ENCODE measurements at regions of chr19 and their contacts with region 1.

Region 1: GRCh38 chr19:872266-872951 is 12.9 kb downstream of the CFD start:
- DNase-seq: peak; percentile 65 to 92 (median 82)
- ATAC-seq: peak; percentile 81 to 84
- H3K4me3 Mint-ChIP-seq: peak overlapping the region; percentile 70 to 85 (median 82)
- H3K27ac Mint-ChIP-seq: peak overlapping the region; percentile 59 to 96 (median 94)
- H3K4me1 Mint-ChIP-seq: peaks cover 7 to 17% (median 11%) of the 10 kb centered on the region in 4 donors
- H3K27me3 Mint-ChIP-seq: peaks cover 0 to 2% (median 0%) of the 10 kb centered on the region in 5 donors

Region 2: DNA sequence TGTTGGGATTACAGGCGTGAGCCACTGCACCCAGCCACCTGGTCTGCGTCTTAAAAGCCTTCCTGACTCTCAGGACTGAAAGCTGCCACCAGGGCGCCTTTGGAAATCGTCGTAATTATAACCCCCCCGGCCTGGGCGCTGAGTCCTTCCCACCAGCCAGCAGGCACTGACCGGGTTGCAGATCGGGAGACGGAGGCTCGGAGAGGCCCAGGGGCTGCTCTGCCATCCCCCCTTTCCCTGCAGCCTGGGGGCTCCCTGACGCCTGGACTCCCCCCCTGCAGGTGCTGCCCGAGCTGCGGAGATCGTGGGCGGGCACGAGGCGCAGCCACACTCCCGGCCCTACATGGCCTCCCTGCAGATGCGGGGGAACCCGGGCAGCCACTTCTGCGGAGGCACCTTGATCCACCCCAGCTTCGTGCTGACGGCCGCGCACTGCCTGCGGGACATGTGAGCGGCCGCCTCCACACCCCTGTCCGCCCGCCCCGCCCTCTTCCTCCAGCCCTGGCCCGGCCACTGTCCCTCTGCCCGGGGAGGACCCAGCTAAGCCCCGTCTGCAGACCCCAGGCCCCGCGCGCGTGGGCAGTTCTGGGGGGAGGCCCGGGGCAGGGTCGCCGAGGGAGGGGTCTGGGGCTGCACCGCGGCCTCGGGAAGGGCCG is 29.1 kb before region 1 on chr19:
- POLR2A ChIA-PET with region 1: no interaction called
- DNase-seq: no peak
- ATAC-seq: peak; percentile 44 to 54
- H3K4me3 Mint-ChIP-seq: peak overlapping the region in 2 of 10 donors; percentile 9 to 36
- H3K27ac Mint-ChIP-seq: no peak overlapping the region
- H3K4me1 Mint-ChIP-seq: peaks cover 3 to 13% (median 6%) of the 10 kb centered on the region in 4 donors
- H3K27me3 Mint-ChIP-seq: peaks cover 15 to 55% (median 38%) of the 10 kb centered on the region in 5 donors

Region 3: DNA sequence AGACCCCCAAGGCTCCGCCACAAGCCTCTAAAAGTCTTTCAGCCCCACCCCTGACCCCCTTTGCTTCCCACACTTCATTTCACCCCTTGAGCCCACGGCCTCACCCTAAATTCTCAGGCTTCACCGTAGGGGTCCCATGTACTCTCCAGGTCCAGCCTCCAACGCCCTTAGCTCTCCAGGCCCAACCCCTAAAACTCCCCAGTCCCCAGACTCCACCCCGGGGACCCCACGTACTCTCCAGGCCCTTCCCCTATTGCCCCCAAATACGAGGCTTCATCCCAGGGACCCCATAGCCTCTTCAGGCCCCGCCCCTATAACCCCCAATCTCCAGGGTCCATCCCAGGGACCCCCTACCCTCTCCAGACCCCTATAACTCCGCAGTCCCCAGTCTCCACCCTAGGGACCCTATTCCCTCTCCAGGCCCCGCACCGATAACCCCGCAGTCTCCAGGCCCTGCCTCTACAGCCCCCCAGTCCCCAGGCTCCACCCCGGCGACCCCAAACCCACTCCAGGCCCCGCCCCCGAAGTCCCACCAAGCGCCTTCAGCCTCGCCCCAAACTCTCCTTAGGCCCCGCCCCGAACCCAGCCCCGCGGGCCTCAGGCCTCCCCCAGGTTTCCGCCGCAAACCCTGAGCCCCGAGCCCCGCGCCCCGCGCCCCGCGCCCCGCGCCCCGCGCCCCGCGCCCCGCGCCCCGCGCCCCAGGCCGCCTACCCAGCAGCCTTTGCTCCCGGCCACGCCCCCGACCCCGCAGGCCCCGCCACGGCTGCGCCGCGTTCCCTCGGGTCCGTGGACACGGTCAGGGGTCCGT is 20.0 kb after region 1 on chr19:
- POLR2A ChIA-PET with region 1: interaction called, 20 read pairs
- DNase-seq: peak in 1 of 10 donors; percentile 53
- ATAC-seq: peak; percentile 49 to 59
- H3K4me3 Mint-ChIP-seq: peak overlapping the region; percentile 77 to 96 (median 90)
- H3K27ac Mint-ChIP-seq: peak overlapping the region; percentile 66 to 100 (median 97)
- H3K4me1 Mint-ChIP-seq: peaks cover 6 to 41% (median 32%) of the 10 kb centered on the region in 4 donors
- H3K27me3 Mint-ChIP-seq: peaks cover 0 to 3% (median 0%) of the 10 kb centered on the region in 5 donors

Region 4: GRCh38 chr19:900302-901111 is 28.1 kb after region 1 on chr19:
- POLR2A ChIA-PET with region 1: interaction called, 19 read pairs
- DNase-seq: peak in 2 of 10 donors; percentile 39 to 74
- ATAC-seq: peak; percentile 33 to 62
- H3K4me3 Mint-ChIP-seq: no peak overlapping the region
- H3K27ac Mint-ChIP-seq: peak overlapping the region in 5 of 10 donors; percentile 38 to 83 (median 51)
- H3K4me1 Mint-ChIP-seq: peaks cover 5 to 46% (median 15%) of the 10 kb centered on the region in 4 donors
- H3K27me3 Mint-ChIP-seq: peaks cover 0 to 3% (median 0%) of the 10 kb centered on the region in 5 donors

Region 5: GRCh38 chr19:907183-907853 is 34.9 kb after region 1 on chr19:
- POLR2A ChIA-PET with region 1: interaction called, 23 read pairs
- DNase-seq: peak in 3 of 10 donors; percentile 45 to 49 (median 47)
- ATAC-seq: peak in 1 of 2 donors; percentile 4
- H3K4me3 Mint-ChIP-seq: peak overlapping the region; percentile 48 to 91 (median 86)
- H3K27ac Mint-ChIP-seq: peak overlapping the region; percentile 99 to 100 (median 100)
- H3K4me1 Mint-ChIP-seq: peaks cover 14 to 72% (median 62%) of the 10 kb centered on the region in 4 donors
- H3K27me3 Mint-ChIP-seq: no peaks in the 10 kb centered on the region

Region 6: GRCh38 chr19:920051-920864 is 47.8 kb after region 1 on chr19:
- POLR2A ChIA-PET with region 1: interaction called, 165 read pairs
- DNase-seq: peak in 9 of 10 donors; percentile 60 to 89 (median 71)
- ATAC-seq: peak; percentile 63 to 67
- H3K4me3 Mint-ChIP-seq: peak overlapping the region; percentile 67 to 90 (median 84)
- H3K27ac Mint-ChIP-seq: peak overlapping the region in 8 of 10 donors; percentile 17 to 90 (median 82)
- H3K4me1 Mint-ChIP-seq: peaks cover 11 to 34% (median 24%) of the 10 kb centered on the region in 4 donors
- H3K27me3 Mint-ChIP-seq: peaks cover 0 to 2% (median 0%) of the 10 kb centered on the region in 5 donors